Aorta (tissue), 5 donors: ENCODE measurements at regions of chr2 and their contacts with region 1.

Region 1: DNA sequence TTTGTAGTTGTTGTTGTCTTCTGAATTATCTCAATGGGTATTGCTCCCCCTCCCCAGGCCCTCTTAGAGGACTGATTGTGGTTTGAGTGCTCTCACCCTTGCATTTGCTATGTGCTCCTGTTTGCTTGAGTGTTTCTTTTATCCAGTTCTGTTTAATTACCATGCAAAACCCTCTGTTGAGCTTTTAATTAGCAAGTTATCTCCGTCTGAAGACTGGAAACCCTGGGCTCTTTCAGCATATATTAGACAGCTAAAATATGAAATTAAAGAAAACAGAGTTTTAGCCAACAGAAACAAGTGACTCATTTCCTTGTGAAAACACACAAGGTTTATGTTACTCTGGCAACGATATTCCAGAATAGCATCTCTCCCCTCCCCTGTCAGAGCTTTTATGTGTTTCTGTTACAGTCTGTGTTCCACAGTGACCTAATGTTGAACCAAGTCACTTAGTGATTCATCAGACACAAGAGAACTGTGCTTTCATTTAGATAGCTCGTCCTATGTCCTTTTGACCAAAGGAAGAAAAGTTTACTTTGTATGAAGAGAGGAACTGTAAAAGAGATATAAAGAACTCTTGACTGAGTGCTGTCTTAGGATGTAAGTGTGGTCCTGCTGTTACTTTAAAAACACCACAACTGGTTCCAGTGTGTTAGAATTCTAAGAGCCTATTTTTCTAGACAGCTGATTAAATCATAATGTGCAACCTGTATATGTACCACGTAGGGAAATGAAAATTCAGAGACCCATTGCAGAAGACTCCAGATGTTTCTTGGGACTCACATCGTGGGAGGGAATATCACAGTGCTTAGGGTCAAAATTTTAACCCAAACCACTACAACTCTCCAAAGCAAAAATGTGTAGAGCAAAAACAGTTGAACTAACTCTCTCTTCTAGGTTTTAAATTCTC is 172.8 kb upstream of the RBMS1 start:
- DNase-seq: no peak
- ATAC-seq: peak; percentile 95
- H3K4me3 ChIP-seq: peak overlapping the region; percentile 8 to 18
- H3K27ac ChIP-seq: peak overlapping the region; percentile 74 to 82
- H3K4me1 ChIP-seq: peaks cover 0 to 1% of the 10 kb centered on the region in 2 donors
- H3K27me3 ChIP-seq: no peaks in the 10 kb centered on the region

Region 2: DNA sequence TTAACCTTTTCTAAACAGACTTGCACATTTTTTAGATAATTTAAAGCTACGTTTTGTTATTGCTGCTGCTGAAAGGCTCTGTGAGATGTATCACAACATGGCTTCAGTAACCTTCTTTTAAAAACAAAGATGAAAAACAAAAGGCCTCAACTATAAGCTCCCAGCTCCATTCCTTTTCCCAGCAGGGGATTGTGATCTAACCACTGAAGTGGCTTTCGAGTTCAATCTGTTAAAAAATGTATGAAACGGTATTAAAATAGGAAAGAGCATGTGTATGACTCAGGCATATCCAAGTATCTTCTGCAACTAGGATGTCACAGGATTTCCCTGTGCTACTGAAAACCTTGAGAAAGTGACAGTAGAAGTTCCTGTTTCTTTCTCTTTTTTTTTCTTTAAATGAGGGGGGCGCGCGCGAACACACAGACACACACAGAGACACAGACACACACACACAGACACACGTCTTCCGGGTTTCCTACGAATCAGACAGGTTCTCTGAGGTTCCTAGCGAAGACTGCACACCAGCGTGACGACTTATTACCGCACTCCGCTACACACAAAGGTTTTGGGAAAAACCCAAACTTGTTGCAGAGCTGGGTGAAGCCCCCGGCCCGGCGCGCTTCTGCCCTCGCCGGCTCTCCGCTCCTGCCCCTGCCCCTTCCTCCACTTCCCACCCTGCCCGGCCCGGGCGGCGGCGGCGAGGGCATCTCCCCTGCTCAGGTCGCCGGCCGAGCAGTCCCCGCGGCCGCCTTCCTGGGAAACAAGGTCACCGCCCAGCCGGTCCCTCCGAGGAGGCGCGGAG is 259.6 kb before region 1 on chr2:
- intact Hi-C with region 1: loop called in 1 of 2 experiments (anchors 10 kb)
- DNase-seq: peak; percentile 74 to 79
- ATAC-seq: peak; percentile 58
- H3K4me3 ChIP-seq: peak overlapping the region; percentile 98 to 99
- H3K27ac ChIP-seq: peak overlapping the region; percentile 80 to 96
- H3K4me1 ChIP-seq: peaks cover 4 to 7% of the 10 kb centered on the region in 2 donors
- H3K27me3 ChIP-seq: no peaks in the 10 kb centered on the region

Region 3: GRCh38 chr2:160429248-160430000 is 237.0 kb before region 1 on chr2:
- intact Hi-C with region 1: loop called in 1 of 2 experiments (anchors 10 kb)
- DNase-seq: no peak
- ATAC-seq: no peak
- H3K4me3 ChIP-seq: no peak overlapping the region
- H3K27ac ChIP-seq: peak overlapping the region in 1 of 2 donors; percentile 44
- H3K4me1 ChIP-seq: peaks cover 3 to 5% of the 10 kb centered on the region in 2 donors
- H3K27me3 ChIP-seq: no peaks in the 10 kb centered on the region

Region 4: GRCh38 chr2:160538559-160539355 is 127.7 kb before region 1 on chr2:
- intact Hi-C with region 1: no loop called
- DNase-seq: no peak
- ATAC-seq: no peak
- H3K4me3 ChIP-seq: no peak overlapping the region
- H3K27ac ChIP-seq: no peak overlapping the region
- H3K4me1 ChIP-seq: no peaks in the 10 kb centered on the region
- H3K27me3 ChIP-seq: no peaks in the 10 kb centered on the region

Region 5: GRCh38 chr2:160630801-160631590 is 35.4 kb before region 1 on chr2:
- intact Hi-C with region 1: no loop called
- DNase-seq: peak in 1 of 2 donors; percentile 49
- ATAC-seq: peak; percentile 59
- H3K4me3 ChIP-seq: no peak overlapping the region
- H3K27ac ChIP-seq: no peak overlapping the region
- H3K4me1 ChIP-seq: peaks cover 0 to 4% of the 10 kb centered on the region in 2 donors
- H3K27me3 ChIP-seq: no peaks in the 10 kb centered on the region